Keratinocyte (primary cell): ENCODE measurements at regions of chr9 and their contacts with region 1.

Region 1: GRCh38 chr9:112224401-112225289 is 49.5 kb upstream of the SUSD1 start:
- DNase-seq: no peak
- H3K4me3 ChIP-seq: peak overlapping the region in 1 of 3 experiments; percentile 25
- H3K27ac ChIP-seq: peak overlapping the region; percentile 60
- H3K4me1 ChIP-seq: peaks cover 20% of the 10 kb centered on the region
- H3K27me3 ChIP-seq: no peaks in the 10 kb centered on the region
- CTCF ChIP-seq: no peak

Region 2: GRCh38 chr9:112112941-112113681 is 111.5 kb before region 1 on chr9:
- dilution Hi-C with region 1: loop called (anchors 25 kb)
- DNase-seq: peak; percentile 53
- H3K4me3 ChIP-seq: no peak overlapping the region
- H3K27ac ChIP-seq: peak overlapping the region; percentile 74
- H3K4me1 ChIP-seq: peaks cover 29% of the 10 kb centered on the region
- H3K27me3 ChIP-seq: no peaks in the 10 kb centered on the region
- CTCF ChIP-seq: peak; percentile 80 to 88 (median 87)